Stomach (tissue), 19 donors: ENCODE measurements at regions of chr9 and their contacts with region 1.

Region 1: DNA sequence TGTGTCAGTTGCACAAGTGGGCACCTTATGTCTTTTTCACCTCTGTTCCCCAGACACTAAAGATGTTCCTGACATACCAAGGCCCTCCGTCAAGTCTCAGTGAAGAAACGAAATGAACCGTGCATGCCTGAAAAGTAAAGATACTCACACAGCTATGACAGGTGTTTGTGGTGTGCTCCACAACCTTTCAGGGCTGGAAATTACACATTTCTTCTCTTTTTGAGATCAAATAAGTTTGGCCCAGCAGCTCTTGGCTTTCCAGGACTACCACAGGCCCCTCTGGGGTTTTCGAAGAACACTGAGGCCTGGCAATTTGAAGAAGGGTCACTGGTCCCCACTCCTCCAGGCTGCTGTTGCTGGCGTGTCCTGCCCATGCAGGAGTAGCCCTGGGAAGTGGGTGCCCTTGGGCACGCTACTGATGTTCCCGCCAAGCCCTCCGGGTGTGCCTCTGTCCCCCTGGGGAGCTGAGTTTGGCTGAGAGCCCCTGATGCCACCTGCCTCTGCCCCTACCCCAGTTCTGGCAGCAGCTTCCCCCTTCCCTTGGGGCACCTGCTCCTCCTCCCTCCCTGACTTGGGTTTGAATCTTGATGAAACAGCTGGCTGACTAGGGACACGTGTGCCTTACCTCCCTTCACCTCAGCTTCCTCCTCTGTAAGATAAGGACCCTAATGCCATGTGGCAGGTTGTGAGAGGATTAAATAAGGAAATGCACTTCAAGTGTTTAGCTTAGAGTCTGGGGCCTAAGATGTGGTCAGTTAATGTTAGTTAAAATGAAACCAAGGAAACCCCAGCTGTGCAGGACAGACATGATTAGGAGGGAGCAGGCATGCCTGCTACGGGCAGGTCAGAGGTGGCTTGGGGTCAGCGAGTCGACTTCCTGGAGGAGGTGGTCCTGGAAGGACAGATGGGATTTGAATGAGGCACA is 49.1 kb upstream of the GADD45G start:
- DNase-seq: peak in 1 of 2 donors; percentile 57
- H3K4me3 ChIP-seq: no peak overlapping the region
- H3K27ac ChIP-seq: peak overlapping the region in 4 of 5 donors; percentile 1 to 85 (median 48)
- H3K4me1 ChIP-seq: peaks cover 0 to 23% (median 11%) of the 10 kb centered on the region in 4 donors
- H3K27me3 ChIP-seq: no peaks in the 10 kb centered on the region
- CTCF ChIP-seq: no peak
- EP300 ChIP-seq: no peak
- POLR2A ChIP-seq: no peak

Region 2: GRCh38 chr9:89323390-89323789 is 232.3 kb before region 1 on chr9:
- intact Hi-C with region 1: loop called (anchors 10 kb)
- DNase-seq: no peak
- H3K4me3 ChIP-seq: no peak overlapping the region
- H3K27ac ChIP-seq: no peak overlapping the region
- H3K4me1 ChIP-seq: peaks cover 20 to 63% (median 39%) of the 10 kb centered on the region in 4 donors
- H3K27me3 ChIP-seq: no peaks in the 10 kb centered on the region
- CTCF ChIP-seq: no peak
- EP300 ChIP-seq: no peak
- POLR2A ChIP-seq: no peak

Region 3: GRCh38 chr9:90007516-90008440 is 452.1 kb after region 1 on chr9:
- intact Hi-C with region 1: no loop called
- DNase-seq: no peak
- H3K4me3 ChIP-seq: no peak overlapping the region
- H3K27ac ChIP-seq: peak overlapping the region; percentile 26 to 73 (median 65)
- H3K4me1 ChIP-seq: peaks cover 8 to 48% (median 24%) of the 10 kb centered on the region in 4 donors
- H3K27me3 ChIP-seq: no peaks in the 10 kb centered on the region
- CTCF ChIP-seq: no peak
- EP300 ChIP-seq: no peak
- POLR2A ChIP-seq: no peak